ENCODE measurements at regions of chr3 and their contacts with region 1.

Region 1: DNA sequence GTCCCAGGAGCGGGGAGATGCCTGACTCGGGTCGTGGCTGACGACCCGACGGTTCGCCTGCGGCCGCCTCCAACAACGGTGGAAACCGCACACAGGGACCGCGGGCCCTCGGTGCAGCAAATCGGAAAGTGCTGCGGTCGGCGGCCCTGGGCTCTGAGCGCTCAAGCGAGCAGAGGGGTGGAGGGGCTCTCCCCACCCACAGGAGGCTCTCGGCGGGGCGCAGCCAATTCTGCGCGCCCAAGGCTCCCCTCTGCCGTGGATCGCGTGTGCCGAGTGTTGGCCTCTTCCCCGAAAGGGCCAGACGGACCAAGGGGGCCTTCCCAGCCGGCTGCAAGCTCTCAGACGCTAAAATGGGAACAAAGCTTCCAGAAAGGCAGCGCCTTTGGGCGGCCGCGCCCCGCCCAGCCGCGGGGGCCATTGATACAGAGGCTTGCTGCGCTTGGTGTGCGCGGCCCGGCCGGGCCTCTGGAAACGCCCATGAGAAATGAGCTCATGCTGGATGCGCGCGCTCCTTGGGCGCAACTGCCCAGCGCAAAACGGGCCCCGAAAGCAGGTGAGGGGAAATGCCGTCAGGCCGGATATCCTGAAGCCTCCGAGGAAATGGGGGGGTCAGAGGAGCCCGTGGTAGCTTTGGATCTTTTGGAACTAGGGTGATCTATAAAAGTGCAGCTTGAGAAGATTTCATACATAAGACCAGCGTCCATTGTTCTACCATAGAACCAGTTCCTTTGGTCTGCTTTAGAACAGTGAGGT is 1.2 kb upstream of the GSK3B start:
- DNase-seq: peak; percentile 70 to 96
- H3K4me3 ChIP-seq: peak overlapping the region; percentile 70 to 90
- H3K27ac ChIP-seq: peak overlapping the region; percentile 97 to 100
- H3K4me1 ChIP-seq: peaks cover 0 to 5% of the 10 kb centered on the region in 2 donors
- H3K27me3 ChIP-seq: no peaks in the 10 kb centered on the region
- CTCF ChIP-seq: no peak

Region 2: GRCh38 chr3:119463171-119464169 is 631.9 kb before region 1 on chr3 and contains the start of gene TMEM39A:
- intact Hi-C with region 1: loop called (anchors 10 kb)
- DNase-seq: peak; percentile 97 to 100
- H3K4me3 ChIP-seq: peak within 1 kb of the TSS; percentile 84 to 91
- H3K27ac ChIP-seq: peak within 1 kb of the TSS; percentile 87 to 92
- H3K4me1 ChIP-seq: peaks cover 4 to 20% of the 10 kb centered on the region in 2 donors
- H3K27me3 ChIP-seq: no peaks in the 10 kb centered on the region
- CTCF ChIP-seq: no peak
- total RNA-seq, gene TMEM39A: 115 TPM

Region 3: DNA sequence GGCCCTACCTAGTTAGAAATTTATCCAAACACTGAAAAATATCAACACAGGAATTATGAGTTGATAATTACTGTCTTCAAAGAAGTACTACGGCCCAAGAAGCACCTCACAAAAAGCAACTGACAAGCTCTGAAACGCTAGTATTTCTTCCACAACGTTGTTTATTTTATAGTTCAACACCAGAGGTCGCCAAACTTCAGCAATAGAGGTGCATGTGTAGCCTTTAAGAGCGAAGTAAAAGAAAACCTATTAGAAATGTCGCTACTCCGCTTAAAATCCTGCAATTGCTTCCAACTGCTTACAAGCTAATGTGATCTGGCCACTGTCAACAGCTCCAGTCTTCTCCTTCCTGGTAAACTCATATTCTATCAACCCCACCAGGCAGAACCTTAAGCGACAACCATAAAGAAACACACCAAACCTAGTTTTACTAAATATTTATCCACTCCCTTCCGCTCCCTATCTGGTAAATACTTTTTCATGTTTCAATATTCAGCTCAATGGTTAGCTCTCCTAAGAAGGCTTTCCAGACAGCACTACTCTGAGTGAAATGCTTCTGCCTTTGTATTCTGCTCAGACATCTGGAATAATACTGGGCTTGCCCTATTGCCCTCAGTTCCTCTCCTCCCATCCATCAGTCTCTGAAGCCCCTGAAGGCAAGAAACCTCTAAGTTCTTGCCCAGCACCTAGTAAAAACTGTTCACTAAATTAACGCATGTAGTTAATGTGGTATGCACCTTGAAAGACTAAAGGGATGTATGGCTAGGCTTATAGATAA is 203.3 kb before region 1 on chr3:
- intact Hi-C with region 1: loop called (anchors 5 kb)
- DNase-seq: no peak
- H3K4me3 ChIP-seq: no peak overlapping the region
- H3K27ac ChIP-seq: no peak overlapping the region
- H3K4me1 ChIP-seq: no peaks in the 10 kb centered on the region
- H3K27me3 ChIP-seq: no peaks in the 10 kb centered on the region
- CTCF ChIP-seq: peak; percentile 65 to 81 (median 66)

Region 4: DNA sequence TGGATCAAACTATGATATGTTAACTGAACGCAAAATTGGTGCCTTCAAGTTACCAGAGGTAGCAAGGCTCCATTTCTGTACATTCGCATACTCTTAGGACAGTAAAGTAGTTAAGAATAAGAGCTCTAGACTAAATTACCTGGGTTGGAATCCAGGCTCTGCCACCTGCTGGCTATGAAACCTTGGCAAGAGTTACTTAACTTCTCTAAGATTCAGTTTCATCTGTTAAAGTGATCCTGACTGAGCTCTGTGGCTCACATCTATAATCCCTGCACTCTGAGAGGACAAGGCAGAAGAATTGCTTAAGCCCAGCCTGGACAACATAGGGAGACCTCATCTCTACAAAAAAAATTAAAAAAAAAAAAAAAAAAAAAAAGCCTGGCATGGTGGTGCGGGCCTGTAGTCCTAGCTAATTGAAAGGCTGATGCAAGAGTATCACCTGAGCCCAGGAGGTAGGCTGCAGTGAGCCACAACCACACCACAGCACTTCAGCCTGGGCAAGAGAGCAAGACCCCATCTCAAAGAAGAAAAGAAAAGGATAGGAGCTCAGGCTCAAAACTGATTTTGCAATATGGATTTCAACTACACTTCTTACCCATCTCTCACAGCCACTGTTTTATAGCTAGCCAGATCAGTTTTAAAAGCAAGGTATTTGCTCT is 22.4 kb before region 1 on chr3:
- intact Hi-C with region 1: no loop called
- DNase-seq: no peak
- H3K4me3 ChIP-seq: no peak overlapping the region
- H3K27ac ChIP-seq: no peak overlapping the region
- H3K4me1 ChIP-seq: peaks cover 0 to 2% of the 10 kb centered on the region in 2 donors
- H3K27me3 ChIP-seq: no peaks in the 10 kb centered on the region
- CTCF ChIP-seq: no peak

Region 5: GRCh38 chr3:120147072-120147871 is 51.9 kb after region 1 on chr3:
- intact Hi-C with region 1: no loop called
- DNase-seq: no peak
- H3K4me3 ChIP-seq: no peak overlapping the region
- H3K27ac ChIP-seq: no peak overlapping the region
- H3K4me1 ChIP-seq: no peaks in the 10 kb centered on the region
- H3K27me3 ChIP-seq: no peaks in the 10 kb centered on the region
- CTCF ChIP-seq: no peak

Region 6: GRCh38 chr3:120169407-120169806 is 74.0 kb after region 1 on chr3:
- intact Hi-C with region 1: no loop called
- DNase-seq: no peak
- H3K4me3 ChIP-seq: no peak overlapping the region
- H3K27ac ChIP-seq: no peak overlapping the region
- H3K4me1 ChIP-seq: peaks cover 0 to 5% of the 10 kb centered on the region in 2 donors
- H3K27me3 ChIP-seq: no peaks in the 10 kb centered on the region
- CTCF ChIP-seq: no peak

Region 7: GRCh38 chr3:120348981-120349818 is 253.8 kb after region 1 on chr3 and contains the start of gene LRRC58:
- intact Hi-C with region 1: loop called (anchors 2 kb)
- DNase-seq: peak; percentile 42 to 94
- H3K4me3 ChIP-seq: peak within 1 kb of the TSS; percentile 89 to 96
- H3K27ac ChIP-seq: peak within 1 kb of the TSS; percentile 92 to 94
- H3K4me1 ChIP-seq: peaks cover 0 to 14% of the 10 kb centered on the region in 2 donors
- H3K27me3 ChIP-seq: no peaks in the 10 kb centered on the region
- CTCF ChIP-seq: peak in 1 of 3 experiments; percentile 23
- total RNA-seq, gene LRRC58: 14.7 TPM

Region 8: GRCh38 chr3:120558771-120559241 is 463.4 kb after region 1 on chr3:
- intact Hi-C with region 1: loop called (anchors 2 kb)
- DNase-seq: peak; percentile 62 to 93
- H3K4me3 ChIP-seq: peak overlapping the region; percentile 42 to 66
- H3K27ac ChIP-seq: peak overlapping the region; percentile 67 to 89
- H3K4me1 ChIP-seq: peaks cover 15 to 25% of the 10 kb centered on the region in 2 donors
- H3K27me3 ChIP-seq: no peaks in the 10 kb centered on the region
- CTCF ChIP-seq: peak; percentile 92 to 98 (median 97)

Region 9: DNA sequence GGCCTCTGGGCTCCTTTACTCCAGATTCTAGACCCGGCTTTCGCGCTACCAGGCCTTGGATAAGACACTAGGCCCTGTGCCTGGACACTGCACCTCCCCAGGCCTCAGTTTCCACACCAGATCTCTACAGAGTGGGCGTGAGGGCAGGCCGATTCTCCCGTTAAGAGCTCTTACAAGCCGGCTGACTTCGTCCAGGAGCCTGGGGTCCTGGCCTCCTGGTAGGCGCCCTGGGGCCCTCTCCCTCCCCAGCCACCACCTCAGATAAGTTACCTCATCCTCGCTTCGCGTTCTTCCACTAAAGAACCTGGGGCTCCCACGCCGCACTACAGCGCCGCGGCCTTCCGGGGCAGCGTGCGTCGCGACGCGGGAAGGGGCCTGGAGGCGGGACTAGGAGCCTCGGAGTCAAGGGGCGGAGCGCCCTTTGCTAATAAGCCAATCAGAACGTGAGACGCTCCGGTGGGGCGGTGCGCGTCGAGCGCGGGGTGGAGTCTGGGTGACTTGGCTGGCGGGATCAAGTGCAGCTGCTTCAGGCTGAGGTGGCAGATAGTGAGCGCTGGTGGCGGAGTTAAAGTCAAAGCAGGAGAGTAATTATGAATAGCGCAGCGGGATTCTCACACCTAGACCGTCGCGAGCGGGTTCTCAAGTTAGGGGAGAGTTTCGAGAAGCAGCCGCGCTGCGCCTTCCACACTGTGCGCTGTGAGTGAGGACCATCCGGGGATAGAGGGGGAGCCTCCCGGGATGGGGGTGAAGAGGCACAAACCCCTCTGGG is 1739.5 kb after region 1 on chr3 and contains the starts of genes EAF2 and IQCB1:
- intact Hi-C with region 1: loop called (anchors 10 kb)
- DNase-seq: peak; percentile 85 to 98
- H3K4me3 ChIP-seq: peak within 1 kb of the TSS; percentile 82 to 87
- H3K27ac ChIP-seq: peak within 1 kb of the TSS; percentile 67 to 82
- H3K4me1 ChIP-seq: peaks cover 0 to 18% of the 10 kb centered on the region in 2 donors
- H3K27me3 ChIP-seq: no peaks in the 10 kb centered on the region
- CTCF ChIP-seq: no peak
- total RNA-seq, gene EAF2: 2.4 TPM
- total RNA-seq, gene IQCB1: 2.9 TPM